AG04450 (cell line): ENCODE measurements at regions of chr10 and their contacts with region 1.

Region 1: GRCh38 chr10:88835096-88835909 is 16.3 kb downstream of the ANKRD22 start:
- DNase-seq: peak; percentile 75
- H3K4me3 ChIP-seq: no peak overlapping the region
- H3K27ac ChIP-seq: no peak overlapping the region
- H3K27me3 ChIP-seq: no peaks in the 10 kb centered on the region
- CTCF ChIP-seq: peak; percentile 90

Region 2: GRCh38 chr10:88820748-88821389 is 14.4 kb before region 1 on chr10:
- CTCF ChIA-PET with region 1: interaction called, 30 read pairs
- POLR2A ChIA-PET with region 1: no interaction called
- DNase-seq: peak; percentile 18
- H3K4me3 ChIP-seq: no peak overlapping the region
- H3K27ac ChIP-seq: no peak overlapping the region
- H3K27me3 ChIP-seq: no peaks in the 10 kb centered on the region
- CTCF ChIP-seq: no peak

Region 3: DNA sequence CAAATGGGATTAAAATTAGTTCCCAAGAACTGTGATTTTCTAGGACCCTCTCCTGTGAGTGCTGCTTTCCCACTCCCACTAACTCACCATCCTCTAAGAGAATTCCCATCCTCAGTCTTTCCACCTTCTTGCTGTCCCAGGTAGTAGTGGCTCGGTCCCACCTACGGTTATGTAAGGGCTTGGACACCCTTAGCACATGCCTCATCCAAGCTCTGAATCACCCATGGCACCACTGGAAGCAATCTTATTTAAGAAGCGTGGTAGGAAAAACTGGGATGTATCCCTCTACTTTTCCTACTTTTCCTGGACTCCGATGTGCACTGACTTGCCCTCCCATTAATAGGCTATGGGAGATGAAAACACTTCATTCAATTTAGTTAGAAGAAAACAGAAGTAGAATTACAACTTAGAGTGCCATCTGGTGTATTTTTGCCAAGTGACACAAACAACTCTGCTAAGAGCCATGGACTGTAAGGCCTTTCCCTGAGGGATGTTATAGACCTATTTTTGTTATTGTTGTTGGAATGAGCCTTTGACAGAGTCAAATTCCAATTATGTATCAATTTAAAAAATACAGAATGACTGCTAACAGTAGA is 30.1 kb after region 1 on chr10:
- CTCF ChIA-PET with region 1: interaction called, 22 read pairs
- POLR2A ChIA-PET with region 1: no interaction called
- DNase-seq: no peak
- H3K4me3 ChIP-seq: no peak overlapping the region
- H3K27ac ChIP-seq: no peak overlapping the region
- H3K27me3 ChIP-seq: no peaks in the 10 kb centered on the region
- CTCF ChIP-seq: peak; percentile 26; the same call in 1 of the 2 replicates

Region 4: GRCh38 chr10:88901206-88901983 is 66.1 kb after region 1 on chr10:
- CTCF ChIA-PET with region 1: interaction called, 19 read pairs
- POLR2A ChIA-PET with region 1: no interaction called
- DNase-seq: no peak
- H3K4me3 ChIP-seq: no peak overlapping the region
- H3K27ac ChIP-seq: no peak overlapping the region
- H3K27me3 ChIP-seq: no peaks in the 10 kb centered on the region
- CTCF ChIP-seq: no peak

Region 5: DNA sequence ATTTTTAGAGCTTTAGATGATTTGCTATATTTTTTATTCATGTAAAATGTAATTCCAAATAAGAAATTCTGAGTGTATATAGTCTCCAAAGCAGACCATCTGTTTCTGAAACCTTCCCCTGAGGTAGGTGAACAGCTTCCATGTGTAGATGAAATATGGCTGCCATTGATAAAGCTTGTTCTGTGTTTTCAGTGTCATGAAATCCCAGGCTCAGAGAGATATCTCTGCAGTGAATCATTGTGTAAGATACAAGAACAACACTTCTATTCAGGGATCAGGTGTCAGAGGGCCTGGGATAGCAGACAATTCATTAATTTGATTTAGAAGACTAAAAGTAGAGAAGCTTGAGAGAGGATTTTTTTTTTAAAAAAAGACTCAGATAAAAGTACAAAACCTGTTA is 88.2 kb after region 1 on chr10:
- CTCF ChIA-PET with region 1: interaction called, 467 read pairs
- POLR2A ChIA-PET with region 1: no interaction called
- DNase-seq: no peak
- H3K4me3 ChIP-seq: no peak overlapping the region
- H3K27ac ChIP-seq: no peak overlapping the region
- H3K27me3 ChIP-seq: no peaks in the 10 kb centered on the region
- CTCF ChIP-seq: no peak

Region 6: GRCh38 chr10:88990384-88991160 is 155.3 kb after region 1 on chr10 and contains the start of gene FAS:
- CTCF ChIA-PET with region 1: interaction called, 37 read pairs
- POLR2A ChIA-PET with region 1: no interaction called
- DNase-seq: no peak
- H3K4me3 ChIP-seq: peak within 1 kb of the TSS; percentile 89
- H3K27ac ChIP-seq: peak within 1 kb of the TSS; percentile 84
- H3K27me3 ChIP-seq: no peaks in the 10 kb centered on the region
- CTCF ChIP-seq: no peak
- polyA plus RNA-seq, gene FAS: 67.0 and 78.4 TPM in 2 replicates

Region 7: GRCh38 chr10:89037096-89037495 is 201.8 kb after region 1 on chr10:
- CTCF ChIA-PET with region 1: no interaction called
- POLR2A ChIA-PET with region 1: no interaction called
- DNase-seq: no peak
- H3K4me3 ChIP-seq: no peak overlapping the region
- H3K27ac ChIP-seq: no peak overlapping the region
- H3K27me3 ChIP-seq: no peaks in the 10 kb centered on the region
- CTCF ChIP-seq: no peak